WTC11 (cell line): ENCODE measurements at regions of chr12 and their contacts with region 1.

Region 1: GRCh38 chr12:53321074-53321814 is at the start of gene AAAS:
- DNase-seq: peak; percentile 96
- ATAC-seq: peak; percentile 85
- H3K4me3 Mint-ChIP-seq: peak within 1 kb of the TSS; percentile 96
- H3K27ac Mint-ChIP-seq: peak within 1 kb of the TSS; percentile 99
- H3K4me1 Mint-ChIP-seq: peaks cover 26% of the 10 kb centered on the region
- H3K27me3 Mint-ChIP-seq: peaks cover 37% of the 10 kb centered on the region
- CTCF ChIP-seq: peak; percentile 98
- total RNA-seq, gene AAAS: 95.8 to 104 TPM (median 98.9 TPM) in 3 replicates

Region 2: GRCh38 chr12:53159195-53159839 is 161.9 kb before region 1 on chr12:
- CTCF ChIA-PET with region 1: interaction called, 42 read pairs
- POLR2A ChIA-PET with region 1: interaction called, 3 read pairs
- DNase-seq: peak; percentile 95
- ATAC-seq: peak; percentile 95
- H3K4me3 Mint-ChIP-seq: peak overlapping the region; percentile 50
- H3K27ac Mint-ChIP-seq: no peak overlapping the region
- H3K4me1 Mint-ChIP-seq: peaks cover 5% of the 10 kb centered on the region
- H3K27me3 Mint-ChIP-seq: peaks cover 63% of the 10 kb centered on the region
- CTCF ChIP-seq: peak; percentile 97

Region 3: DNA sequence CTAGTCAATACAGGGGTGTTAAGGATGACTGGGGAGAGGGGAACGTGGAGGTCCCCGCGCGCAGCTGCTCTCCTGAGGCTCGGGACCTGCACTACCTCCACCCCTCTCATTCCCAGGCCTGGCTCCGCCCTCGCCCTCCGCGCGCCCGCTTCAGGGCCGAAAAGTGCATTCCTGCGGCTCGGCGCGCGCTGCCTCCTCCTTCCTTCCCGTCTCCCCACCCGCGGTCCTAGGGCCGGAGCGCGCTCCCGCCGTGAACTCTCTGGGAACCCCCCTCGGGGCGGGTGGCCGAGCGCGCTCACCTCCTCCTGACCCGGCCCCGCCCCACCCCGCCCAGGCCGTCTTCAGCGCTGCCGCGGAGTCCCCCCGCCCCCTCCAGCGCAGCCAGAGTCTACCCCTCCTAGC is 100.4 kb before region 1 on chr12:
- CTCF ChIA-PET with region 1: interaction called, 19 read pairs
- POLR2A ChIA-PET with region 1: no interaction called
- DNase-seq: peak; percentile 94
- ATAC-seq: peak; percentile 38
- H3K4me3 Mint-ChIP-seq: peak overlapping the region; percentile 90
- H3K27ac Mint-ChIP-seq: peak overlapping the region; percentile 98
- H3K4me1 Mint-ChIP-seq: peaks cover 75% of the 10 kb centered on the region
- H3K27me3 Mint-ChIP-seq: peaks cover 7% of the 10 kb centered on the region; the same call in 1 of the 2 replicates
- CTCF ChIP-seq: no peak

Region 4: GRCh38 chr12:53295070-53295890 is 26.0 kb before region 1 on chr12 and contains the start of gene PFDN5:
- CTCF ChIA-PET with region 1: interaction called, 66 read pairs
- POLR2A ChIA-PET with region 1: interaction called, 19 read pairs
- DNase-seq: peak; percentile 85
- ATAC-seq: peak; percentile 85
- H3K4me3 Mint-ChIP-seq: peak within 1 kb of the TSS; percentile 99
- H3K27ac Mint-ChIP-seq: peak within 1 kb of the TSS; percentile 96
- H3K4me1 Mint-ChIP-seq: peaks cover 18% of the 10 kb centered on the region
- H3K27me3 Mint-ChIP-seq: no peaks in the 10 kb centered on the region
- CTCF ChIP-seq: no peak
- total RNA-seq, gene PFDN5: 263 to 286 TPM (median 270 TPM) in 3 replicates

Region 5: GRCh38 chr12:53352331-53353256 is 31.4 kb after region 1 on chr12:
- CTCF ChIA-PET with region 1: interaction called, 148 read pairs
- POLR2A ChIA-PET with region 1: interaction called, 3 read pairs
- DNase-seq: peak; percentile 85
- ATAC-seq: peak; percentile 99
- H3K4me3 Mint-ChIP-seq: no peak overlapping the region
- H3K27ac Mint-ChIP-seq: peak overlapping the region; percentile 76; the same call in 1 of the 2 replicates
- H3K4me1 Mint-ChIP-seq: 0 out of 2 replicates have a peak, but pooled peaks cover 4% of the 10 kb centered on the region
- H3K27me3 Mint-ChIP-seq: peaks cover 2% of the 10 kb centered on the region
- CTCF ChIP-seq: peak; percentile 87

Region 6: DNA sequence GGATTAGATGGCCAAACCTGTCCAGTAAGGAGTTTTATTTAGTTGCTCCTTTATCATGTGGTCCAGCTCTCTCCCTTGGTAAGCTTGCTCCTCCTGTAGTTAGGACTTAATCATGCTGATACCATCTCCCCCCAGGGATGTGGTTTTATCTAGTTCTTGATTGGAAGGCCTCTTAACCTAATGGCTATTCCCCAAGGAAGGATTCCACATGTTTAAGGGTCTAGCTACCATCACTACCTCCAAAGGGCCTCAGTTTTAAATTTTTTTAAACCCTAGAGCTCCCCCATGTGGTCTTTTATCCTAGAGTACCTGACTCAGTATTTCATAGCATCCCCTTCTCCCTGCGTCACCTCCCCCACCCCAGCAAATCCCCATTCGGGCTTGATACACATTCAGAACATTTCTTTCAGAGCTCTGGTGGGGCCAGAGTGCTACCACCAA is 155.5 kb after region 1 on chr12:
- CTCF ChIA-PET with region 1: interaction called, 23 read pairs
- POLR2A ChIA-PET with region 1: no interaction called
- DNase-seq: no peak
- ATAC-seq: peak; percentile 69
- H3K4me3 Mint-ChIP-seq: no peak overlapping the region
- H3K27ac Mint-ChIP-seq: peak overlapping the region; percentile 89
- H3K4me1 Mint-ChIP-seq: peaks cover 43% of the 10 kb centered on the region
- H3K27me3 Mint-ChIP-seq: no peaks in the 10 kb centered on the region
- CTCF ChIP-seq: peak; percentile 27; the same call in 1 of the 2 replicates